ENCODE measurements at regions of chr11 and their contacts with region 1.

Region 1: GRCh38 chr11:3021125-3021524 is 29.0 kb upstream of the NAP1L4 start:
- DNase-seq: no peak
- ATAC-seq: no peak

Region 2: GRCh38 chr11:2930704-2931428 is 90.3 kb before region 1 on chr11:
- intact Hi-C with region 1: loop called (anchors 5 kb)
- DNase-seq: peak; percentile 84
- ATAC-seq: peak; percentile 58

Region 3: GRCh38 chr11:2975594-2975993 is 45.5 kb before region 1 on chr11:
- intact Hi-C with region 1: loop called (anchors 5 kb)
- DNase-seq: no peak
- ATAC-seq: peak; percentile 74

Measured in Right ventricle myocardium inferior (tissue), 1 donor.